ENCODE measurements at regions of chr12 and their contacts with region 1.

Region 1: DNA sequence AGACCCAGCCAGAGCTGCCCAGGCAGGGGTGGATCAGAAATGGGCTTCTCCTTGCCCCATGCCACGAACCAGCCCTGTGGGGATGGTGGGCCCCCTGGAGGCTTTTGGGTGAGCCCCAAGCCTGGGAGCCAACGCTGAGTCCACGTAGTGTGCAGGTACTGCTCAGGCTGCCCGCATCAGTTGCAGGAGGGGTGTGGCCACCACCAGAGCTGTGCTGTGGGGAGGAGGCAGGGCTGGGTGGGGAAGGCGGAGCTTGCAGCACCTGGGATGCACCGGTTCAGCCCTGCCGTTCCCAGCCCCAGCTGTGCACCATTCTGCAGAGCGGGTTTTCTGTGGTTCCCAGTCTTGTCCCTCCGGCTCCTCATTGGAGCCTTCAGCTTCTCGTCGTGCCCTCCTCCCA is 36.3 kb downstream of the IL31 start:
- DNase-seq: peak in 1 of 10 donors; percentile 53

Region 2: DNA sequence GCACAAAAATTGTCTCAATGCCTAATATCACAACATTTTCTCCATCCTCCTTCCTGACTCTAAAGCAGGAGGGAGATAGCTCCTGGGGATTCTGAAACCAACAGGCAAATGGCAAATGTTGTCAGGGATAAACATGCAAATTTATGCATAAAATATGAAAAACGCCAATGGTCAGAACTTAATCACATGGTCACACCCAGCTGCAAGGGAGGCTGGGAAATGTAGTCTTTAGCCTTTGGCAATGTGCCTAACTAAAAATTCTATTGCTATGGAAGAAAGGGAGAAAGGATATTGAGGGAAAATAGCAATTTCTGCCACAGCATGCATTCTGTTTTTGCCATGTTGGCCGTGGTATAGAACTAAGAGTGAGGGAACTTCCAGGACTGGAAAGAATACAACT is 1087.0 kb before region 1 on chr12:
- intact Hi-C with region 1: no loop called
- DNase-seq: peak in 1 of 10 donors; percentile 5

Region 3: DNA sequence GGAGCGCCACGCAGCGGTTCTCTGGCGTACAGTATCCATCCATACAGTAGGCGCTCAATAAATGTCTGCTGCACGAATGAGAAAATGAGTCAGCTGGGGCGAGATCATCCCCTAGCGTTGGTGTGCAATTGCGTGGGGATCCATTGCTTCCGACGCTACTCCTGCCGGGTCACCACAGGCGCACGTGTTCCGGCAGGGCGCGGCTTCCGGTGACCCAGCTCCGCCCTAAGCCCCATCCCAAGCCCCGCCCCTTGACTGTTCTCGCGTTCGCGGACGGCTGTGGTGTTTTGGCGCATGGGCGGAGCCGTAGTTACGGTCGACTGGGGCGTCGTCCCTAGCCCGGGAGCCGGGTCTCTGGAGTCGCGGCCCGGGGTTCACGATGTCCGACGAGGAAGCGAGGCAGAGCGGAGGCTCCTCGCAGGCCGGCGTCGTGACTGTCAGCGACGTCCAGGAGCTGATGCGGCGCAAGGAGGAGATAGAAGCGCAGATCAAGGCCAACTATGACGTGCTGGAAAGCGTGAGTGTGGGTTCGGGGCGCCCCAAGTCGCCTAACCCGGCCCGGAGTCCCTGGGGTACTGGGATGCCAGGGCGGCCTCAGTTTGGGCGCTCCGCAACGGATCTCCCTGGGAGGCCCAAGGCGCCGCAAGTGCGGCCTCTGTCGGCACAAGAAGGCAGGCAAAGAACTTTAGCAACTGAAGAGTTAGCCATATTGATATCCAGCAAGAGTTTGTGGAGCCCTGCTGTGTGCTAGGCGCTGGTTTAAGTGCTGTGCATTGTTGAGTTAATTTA is 249.0 kb before region 1 on chr12 and contains the start of gene PSMD9:
- intact Hi-C with region 1: no loop called
- DNase-seq: peak; percentile 96 to 100 (median 98)

Region 4: DNA sequence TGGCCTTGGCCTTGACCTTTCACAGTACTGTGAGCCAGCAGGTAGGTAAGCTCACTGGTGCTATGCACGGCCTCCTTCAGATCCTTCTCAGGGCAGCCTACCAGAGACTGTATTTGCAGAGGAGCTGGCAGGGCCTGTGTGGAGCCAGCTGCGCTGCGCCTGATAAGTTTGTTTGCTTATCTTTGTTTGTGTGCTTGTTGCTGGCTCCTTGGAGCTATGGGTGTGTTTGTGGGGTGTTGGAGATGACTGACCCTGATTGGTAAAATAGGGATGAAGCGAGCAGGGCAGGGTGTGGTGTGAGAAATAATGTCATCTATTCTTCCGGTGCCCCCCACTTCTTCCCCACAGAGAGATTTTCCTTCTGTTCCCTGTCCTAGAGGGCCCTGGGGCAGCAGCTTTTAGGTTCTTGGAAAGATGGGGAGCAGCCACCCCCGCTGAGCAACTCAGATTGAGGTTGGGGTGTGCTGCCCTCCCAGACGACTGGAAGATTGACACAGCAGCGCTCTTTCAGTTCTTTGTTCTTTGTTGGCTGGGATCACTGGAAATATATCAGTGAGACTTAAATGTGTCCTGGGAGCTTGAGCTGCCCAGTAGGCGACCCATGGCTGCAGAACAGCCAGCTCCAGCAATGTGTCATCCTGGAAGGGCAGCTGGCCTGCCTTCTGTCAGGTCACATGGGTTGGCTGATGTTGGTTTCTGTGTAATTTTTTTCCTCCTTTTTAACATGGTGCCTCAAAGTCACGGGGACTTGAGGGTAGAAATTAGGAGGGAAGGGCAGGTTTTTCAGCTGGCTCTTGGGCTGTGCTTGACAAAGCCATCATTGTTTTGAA is 39.5 kb before region 1 on chr12:
- intact Hi-C with region 1: no loop called
- DNase-seq: peak; percentile 35 to 96 (median 66)

Region 5: GRCh38 chr12:122190842-122191668 is 53.4 kb after region 1 on chr12:
- intact Hi-C with region 1: loop called (anchors 10 kb)
- DNase-seq: peak in 5 of 10 donors; percentile 46 to 93 (median 66)

Region 6: DNA sequence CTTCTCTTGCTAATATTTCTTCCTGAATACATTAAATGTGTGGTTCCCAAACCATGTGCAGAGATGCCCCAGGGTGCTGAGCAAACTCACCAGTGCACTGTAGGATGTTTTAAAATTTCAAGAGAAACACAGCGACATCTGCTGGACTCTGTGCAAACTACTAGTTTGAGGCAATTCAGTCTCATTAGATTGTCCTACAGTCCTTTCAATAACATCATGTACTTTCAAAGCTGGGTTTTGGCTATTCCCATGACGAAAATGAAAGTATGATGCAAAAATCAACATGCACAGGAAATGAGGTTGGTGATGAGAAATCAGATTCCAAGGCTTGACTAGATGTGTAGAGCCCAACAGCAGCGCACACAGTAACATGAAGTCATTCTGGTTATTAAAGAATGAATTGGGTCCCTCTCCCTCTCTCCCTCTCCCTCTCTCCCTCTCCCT is 218.5 kb after region 1 on chr12:
- intact Hi-C with region 1: loop called (anchors 10 kb)
- DNase-seq: peak in 5 of 10 donors; percentile 26 to 59 (median 34)